ENCODE measurements at regions of chr15 and their contacts with region 1.

Region 1: GRCh38 chr15:36050899-36051298 is 504.9 kb upstream of the DPH6 start:
- DNase-seq: no peak
- ATAC-seq: no peak

Region 2: DNA sequence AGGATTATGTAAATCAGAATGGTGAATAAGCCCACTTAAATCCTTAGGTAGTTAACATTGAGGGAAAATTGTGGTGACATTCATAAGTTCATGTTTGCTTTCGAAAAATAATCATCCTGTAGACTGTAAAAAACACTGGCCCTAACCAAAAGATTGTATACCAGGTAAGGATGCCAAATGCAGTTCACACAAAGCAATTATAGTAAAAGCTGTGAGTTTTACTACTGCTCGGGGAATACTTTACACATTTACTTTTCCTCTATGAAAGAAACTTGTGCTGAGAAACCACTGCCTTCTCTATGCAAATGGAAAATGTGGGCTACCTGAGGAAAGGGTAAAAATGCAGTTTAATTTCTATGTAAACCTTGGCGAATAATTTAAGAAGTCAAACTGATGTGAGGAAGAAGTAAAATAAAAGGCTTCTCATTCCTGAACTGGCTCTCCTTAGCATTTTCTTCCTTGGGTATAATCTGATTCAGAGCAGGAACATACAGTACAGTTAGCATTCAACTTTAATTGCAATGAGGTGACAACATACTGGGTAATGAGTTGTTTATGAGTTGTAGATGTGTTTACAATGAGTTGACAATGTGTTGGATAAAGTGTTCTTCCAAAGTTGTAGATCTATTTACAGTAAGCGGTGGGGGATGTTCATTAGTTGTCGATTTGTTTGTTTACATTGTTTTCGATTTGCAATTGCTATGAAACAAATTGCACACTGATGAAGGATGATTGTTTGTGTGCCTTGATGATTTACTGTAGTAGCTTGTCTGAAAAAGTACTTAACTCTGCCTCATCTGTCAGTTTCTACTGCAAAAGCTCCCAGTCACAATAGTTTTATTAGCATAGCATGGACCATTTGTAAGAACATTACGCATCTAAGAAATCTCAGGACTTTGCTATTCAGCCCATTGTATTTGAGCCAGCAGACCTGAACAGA is 52.0 kb before region 1 on chr15:
- intact Hi-C with region 1: loop called (anchors 10 kb)
- DNase-seq: no peak
- ATAC-seq: no peak

Region 3: DNA sequence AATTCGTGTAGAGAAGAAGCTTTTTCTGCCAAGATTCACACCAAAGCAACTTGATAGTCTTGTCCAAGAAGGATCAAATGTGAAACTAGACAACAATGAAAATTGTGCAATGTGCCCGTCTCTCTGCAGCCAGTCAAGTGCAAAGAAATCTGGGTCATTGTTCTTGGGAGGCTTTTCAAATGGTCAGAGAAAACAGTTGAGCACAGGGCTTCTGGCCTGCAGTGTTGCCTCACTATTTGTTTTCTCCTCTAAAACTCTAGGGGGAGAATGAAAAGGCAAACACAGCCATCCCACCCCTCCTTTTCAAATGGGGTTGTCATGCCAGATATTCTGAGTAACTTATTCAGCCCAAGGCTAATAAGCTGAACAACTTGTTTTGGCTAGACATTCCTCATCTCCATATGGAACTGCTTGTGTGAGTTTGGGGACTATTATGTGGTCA is 110.9 kb after region 1 on chr15:
- intact Hi-C with region 1: no loop called
- DNase-seq: peak; percentile 35
- ATAC-seq: peak; percentile 94

Measured in Right ventricle myocardium superior (tissue), 1 donor.